Activated CD4-positive, alpha-beta T cell treated with anti-CD3 and anti-CD28 coated beads, Interleukin-2, amount 10 ng/mL, durations not matched to agents 24 days and 14 days (primary cell): ENCODE measurements at regions of chrX and their contacts with region 1.

Region 1: GRCh38 chrX:154478728-154479622 is at the start of gene LAGE3:
- DNase-seq: peak; percentile 99
- H3K4me3 Mint-ChIP-seq: peak within 1 kb of the TSS; percentile 96
- H3K27ac Mint-ChIP-seq: peak within 1 kb of the TSS; percentile 93
- H3K4me1 Mint-ChIP-seq: peaks cover 20% of the 10 kb centered on the region
- H3K27me3 Mint-ChIP-seq: no peaks in the 10 kb centered on the region
- total RNA-seq, gene LAGE3: 53.0 and 53.1 TPM in 2 replicates

Region 2: DNA sequence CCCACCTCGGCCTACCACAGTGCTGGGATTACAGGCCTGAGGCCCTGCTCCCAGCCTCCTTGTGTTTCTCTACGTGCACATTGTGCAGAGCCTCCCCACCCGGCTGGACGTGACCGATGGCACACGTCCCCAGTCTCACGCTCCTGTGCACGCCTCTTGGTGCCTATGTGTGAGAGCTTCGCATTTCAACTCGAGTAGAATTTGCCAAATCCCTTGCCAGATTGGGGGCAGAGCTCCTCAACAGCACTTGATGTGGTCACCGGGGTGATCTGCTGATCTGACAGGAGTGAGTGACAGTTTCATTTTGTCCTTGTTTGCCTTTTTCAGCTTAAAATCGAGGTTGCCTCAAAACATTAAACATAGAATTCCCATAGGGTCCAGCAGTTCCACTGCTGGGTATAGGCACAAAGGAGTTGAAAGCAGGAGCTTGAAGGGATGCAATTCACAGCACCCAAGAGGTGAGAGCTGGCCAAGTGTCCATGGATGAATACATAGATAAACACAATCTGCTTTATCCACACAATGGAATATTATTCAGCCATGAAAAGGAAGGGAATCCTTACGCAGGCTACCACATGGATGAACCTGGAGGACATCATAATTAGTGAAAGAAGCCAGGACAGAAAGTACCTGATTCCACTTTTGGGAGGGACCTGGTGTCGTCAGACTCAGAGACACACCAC is 488.9 kb before region 1 on chrX:
- intact Hi-C with region 1: no loop called
- DNase-seq: peak; percentile 59
- H3K4me3 Mint-ChIP-seq: no peak overlapping the region
- H3K27ac Mint-ChIP-seq: peak overlapping the region; percentile 41
- H3K4me1 Mint-ChIP-seq: peaks cover 3% of the 10 kb centered on the region
- H3K27me3 Mint-ChIP-seq: no peaks in the 10 kb centered on the region

Region 3: DNA sequence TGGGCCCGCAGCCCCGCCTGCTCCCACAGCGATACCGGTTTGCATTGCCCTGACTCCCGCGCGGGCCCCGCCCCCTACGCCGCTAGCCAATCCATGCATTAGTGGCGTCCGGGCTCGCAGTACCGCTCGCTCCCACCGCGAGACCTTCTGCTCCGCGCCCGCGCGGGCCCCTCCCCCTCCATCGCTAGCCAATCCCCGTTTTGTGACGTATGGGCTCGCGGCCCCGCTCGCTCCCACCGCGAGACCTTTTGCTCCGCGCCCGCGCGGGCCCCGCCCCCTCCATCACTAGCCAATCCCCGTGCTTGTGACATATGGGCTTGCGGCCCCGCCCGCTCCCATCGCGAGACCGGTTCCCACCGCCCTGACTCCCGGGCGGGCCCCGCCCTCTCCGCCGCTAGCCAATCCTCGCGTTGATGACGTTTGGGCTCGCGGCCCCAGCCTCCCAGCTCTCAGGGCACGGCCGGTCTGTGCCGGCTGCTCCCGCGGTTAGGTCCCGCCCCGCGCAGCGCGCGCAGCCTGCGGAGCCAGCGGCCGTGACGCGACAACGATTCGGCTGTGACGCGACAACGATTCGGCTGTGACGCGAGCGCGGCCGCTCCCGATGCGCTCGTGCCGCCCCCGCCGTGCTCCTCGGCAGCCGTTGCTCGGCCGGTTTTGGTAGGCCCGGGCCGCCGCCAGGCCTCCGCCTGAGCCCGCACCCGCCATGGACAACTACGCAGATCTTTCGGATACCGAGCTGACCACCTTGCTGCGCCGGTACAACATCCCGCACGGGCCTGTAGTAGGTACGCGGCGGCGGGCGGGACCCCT is 100.0 kb before region 1 on chrX and contains the start of gene EMD:
- intact Hi-C with region 1: loop called (anchors 5 kb)
- DNase-seq: peak; percentile 98
- H3K4me3 Mint-ChIP-seq: peak within 1 kb of the TSS; percentile 88
- H3K27ac Mint-ChIP-seq: peak within 1 kb of the TSS; percentile 92
- H3K4me1 Mint-ChIP-seq: peaks cover 14% of the 10 kb centered on the region
- H3K27me3 Mint-ChIP-seq: no peaks in the 10 kb centered on the region
- total RNA-seq, gene EMD: 91.7 and 92.8 TPM in 2 replicates

Region 4: GRCh38 chrX:154443992-154444754 is 34.8 kb before region 1 on chrX and contains the start of gene FAM50A:
- intact Hi-C with region 1: loop called (anchors 5 kb)
- DNase-seq: peak; percentile 93
- H3K4me3 Mint-ChIP-seq: peak within 1 kb of the TSS; percentile 80
- H3K27ac Mint-ChIP-seq: peak within 1 kb of the TSS; percentile 80
- H3K4me1 Mint-ChIP-seq: peaks cover 8% of the 10 kb centered on the region
- H3K27me3 Mint-ChIP-seq: no peaks in the 10 kb centered on the region
- total RNA-seq, gene FAM50A: 85.4 and 85.9 TPM in 2 replicates

Region 5: DNA sequence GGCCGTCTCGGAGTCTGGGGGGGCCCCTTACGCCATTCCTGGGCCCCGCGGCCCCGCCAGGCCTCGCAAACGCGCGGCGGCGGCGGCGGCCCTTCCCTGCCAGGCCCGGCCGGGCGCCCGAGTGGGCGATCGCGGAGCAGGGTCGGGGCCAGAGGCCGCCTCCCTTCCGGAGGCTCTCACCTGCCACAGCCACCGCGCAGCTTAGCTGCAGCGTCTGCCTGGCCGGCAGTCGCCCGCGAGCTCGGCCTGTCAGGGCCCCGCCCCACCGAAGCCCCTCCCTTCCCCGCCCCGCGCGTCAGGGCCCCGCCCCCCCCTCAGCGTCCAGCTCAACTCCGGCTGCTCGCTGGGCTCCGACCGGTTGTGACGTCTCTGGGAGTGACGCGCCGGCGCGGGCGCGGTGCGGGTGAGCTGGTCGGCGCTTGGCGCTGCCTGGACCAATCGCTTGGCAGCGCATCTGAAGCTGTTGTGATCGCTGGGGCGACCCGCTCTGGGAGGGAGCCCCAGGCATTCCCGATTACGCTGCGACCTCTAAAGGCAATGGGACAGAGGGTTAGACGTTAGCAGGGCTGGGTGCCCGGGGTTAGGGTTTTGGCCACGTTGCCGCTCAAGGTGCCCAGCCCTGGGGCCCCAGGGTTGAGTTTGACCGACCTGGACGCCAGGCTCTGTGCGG is 11.6 kb after region 1 on chrX and contains the start of gene SLC10A3:
- intact Hi-C with region 1: loop called (anchors 1 kb)
- DNase-seq: peak; percentile 96
- H3K4me3 Mint-ChIP-seq: peak within 1 kb of the TSS; percentile 91
- H3K27ac Mint-ChIP-seq: peak within 1 kb of the TSS; percentile 92
- H3K4me1 Mint-ChIP-seq: peaks cover 12% of the 10 kb centered on the region
- H3K27me3 Mint-ChIP-seq: no peaks in the 10 kb centered on the region
- total RNA-seq, gene SLC10A3: 18.2 and 20.8 TPM in 2 replicates

Region 6: DNA sequence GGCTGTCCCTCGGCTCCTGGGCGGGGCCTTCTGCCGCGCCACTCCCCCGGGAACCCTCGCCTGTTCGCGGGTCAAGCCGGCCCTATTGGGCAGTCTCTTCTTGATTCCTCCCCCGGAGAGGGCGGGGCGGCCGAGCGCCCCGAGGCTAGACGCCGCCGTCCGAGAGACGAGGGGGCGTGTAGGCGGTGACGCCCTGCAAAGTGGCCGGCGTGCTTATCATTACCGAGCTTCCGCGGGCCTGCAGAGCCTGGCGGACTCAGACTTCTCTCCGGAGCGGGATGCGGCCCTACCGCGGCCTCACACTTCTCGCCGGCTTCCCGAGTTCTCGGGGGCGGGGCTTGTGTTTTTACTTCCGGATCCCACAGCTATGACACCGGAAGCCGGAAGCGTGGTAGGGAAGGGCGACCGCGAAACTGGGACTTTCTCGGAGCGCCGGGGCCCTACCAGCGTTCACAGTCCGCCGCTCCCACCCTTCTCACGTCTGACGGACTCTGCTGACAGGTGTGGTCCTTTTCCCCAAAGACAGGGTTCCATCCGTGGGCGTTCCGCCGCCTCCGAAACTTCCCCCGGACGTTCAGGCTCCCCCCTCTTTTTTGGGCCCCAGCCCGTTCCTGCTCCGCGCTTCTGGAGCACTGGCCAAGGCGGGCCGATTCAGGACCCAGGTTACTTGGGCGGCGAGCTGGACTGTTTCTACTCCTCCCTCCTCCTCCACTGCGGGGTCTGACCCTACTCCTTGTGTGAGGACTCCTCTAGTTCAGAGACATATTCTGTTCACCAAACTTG is 68.5 kb after region 1 on chrX and contains the start of gene IKBKG:
- intact Hi-C with region 1: loop called (anchors 1 kb)
- DNase-seq: peak; percentile 97
- H3K4me3 Mint-ChIP-seq: peak within 1 kb of the TSS; percentile 96
- H3K27ac Mint-ChIP-seq: peak within 1 kb of the TSS; percentile 97
- H3K4me1 Mint-ChIP-seq: peaks cover 39% of the 10 kb centered on the region
- H3K27me3 Mint-ChIP-seq: no peaks in the 10 kb centered on the region
- total RNA-seq, gene IKBKG: 37.7 and 38.8 TPM in 2 replicates